Adrenal gland (tissue), 19 donors: ENCODE measurements at regions of chr7 and their contacts with region 1.

Region 1: DNA sequence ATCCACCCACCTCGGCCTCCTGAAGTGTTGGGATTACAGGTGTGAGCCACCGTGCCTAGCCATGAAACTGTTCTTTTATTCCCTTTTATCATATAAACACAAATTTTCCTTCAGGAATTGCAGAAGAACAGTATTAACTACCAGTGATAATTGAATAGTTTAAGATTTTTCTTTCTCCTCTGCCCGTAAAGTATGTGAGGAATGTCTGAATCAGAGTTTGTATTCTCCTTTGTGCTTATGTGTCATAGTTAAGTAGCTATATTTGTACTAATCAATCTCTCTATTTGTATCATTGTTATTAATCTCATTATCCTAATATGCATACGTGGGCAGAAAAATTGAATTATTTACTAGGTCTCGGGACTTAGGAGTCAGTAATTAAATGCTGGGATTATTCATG is 83.6 kb downstream of the ZNF277 start:
- DNase-seq: no peak
- H3K4me3 ChIP-seq: no peak overlapping the region
- H3K27ac ChIP-seq: no peak overlapping the region
- H3K4me1 ChIP-seq: no peaks in the 10 kb centered on the region
- H3K27me3 ChIP-seq: no peaks in the 10 kb centered on the region
- CTCF ChIP-seq: no peak
- POLR2A ChIP-seq: no peak

Region 2: DNA sequence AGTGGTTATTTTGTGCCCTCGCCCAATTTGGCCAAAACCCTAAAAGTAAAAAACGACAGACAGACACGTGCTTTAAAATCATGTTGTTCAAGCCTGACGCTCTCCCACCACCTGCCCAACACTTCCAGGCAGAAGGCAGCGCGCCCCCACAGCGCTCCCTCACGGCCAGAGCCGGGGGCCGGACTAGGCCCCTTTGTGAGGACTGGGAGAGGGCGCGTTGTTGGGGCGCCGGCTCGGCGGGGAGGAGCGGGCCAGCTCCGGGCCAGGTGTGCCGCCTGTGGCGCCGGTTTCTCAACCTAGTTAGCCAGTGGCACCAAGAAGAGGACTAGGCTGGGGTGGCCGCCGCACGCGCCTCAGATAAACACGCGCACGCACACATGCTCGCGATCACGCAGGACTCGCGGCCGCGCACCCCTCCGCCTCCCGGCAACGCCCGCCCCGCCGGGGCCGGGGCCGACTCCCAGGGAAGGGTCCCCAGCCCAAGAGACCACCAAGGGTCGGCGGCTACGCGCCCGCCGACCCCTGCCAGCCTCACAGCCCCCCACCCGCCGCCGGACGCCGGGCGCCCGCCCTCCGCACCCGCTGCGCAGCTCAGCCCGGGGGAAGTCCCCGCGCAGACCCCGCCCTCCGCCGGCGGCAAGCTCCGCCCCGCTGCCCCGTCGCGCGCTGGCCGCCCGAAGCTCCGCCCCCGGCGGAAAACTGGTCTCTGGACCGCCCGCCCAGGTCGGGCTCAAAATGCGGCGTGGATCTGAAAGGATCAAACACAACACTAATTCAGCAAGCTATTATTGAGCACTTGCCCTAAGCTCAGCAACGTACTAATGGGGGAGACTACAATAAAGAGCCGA is 728.0 kb before region 1 on chr7 and contains the start of gene IMMP2L:
- intact Hi-C with region 1: no loop called
- DNase-seq: peak; percentile 84 to 93 (median 90)
- H3K4me3 ChIP-seq: peak within 1 kb of the TSS; percentile 21 to 88 (median 53)
- H3K27ac ChIP-seq: peak within 1 kb of the TSS in 4 of 5 donors; percentile 20 to 92 (median 87)
- H3K4me1 ChIP-seq: peaks cover 11 to 33% of the 10 kb centered on the region in 2 donors
- H3K27me3 ChIP-seq: no peaks in the 10 kb centered on the region
- CTCF ChIP-seq: peak in 3 of 6 experiments; percentile 12 to 34 (median 31)
- POLR2A ChIP-seq: peak; percentile 60 to 70
- total RNA-seq, gene IMMP2L: 13.4 to 34.1 (median 27.1) TPM

Region 3: GRCh38 chr7:112357136-112357535 is 67.1 kb after region 1 on chr7:
- intact Hi-C with region 1: loop called in 1 of 2 experiments (anchors 10 kb)
- DNase-seq: no peak
- H3K4me3 ChIP-seq: no peak overlapping the region
- H3K27ac ChIP-seq: no peak overlapping the region
- H3K4me1 ChIP-seq: no peaks in the 10 kb centered on the region
- H3K27me3 ChIP-seq: no peaks in the 10 kb centered on the region
- CTCF ChIP-seq: no peak
- POLR2A ChIP-seq: no peak